ENCODE measurements at regions of chr17 and their contacts with region 1.

Region 1: GRCh38 chr17:75784473-75785015 is at the start of gene UNK:
- DNase-seq: peak; percentile 97
- ATAC-seq: peak; percentile 67
- H3K4me3 Mint-ChIP-seq: peak within 1 kb of the TSS; percentile 91
- H3K27ac Mint-ChIP-seq: peak within 1 kb of the TSS; percentile 100
- H3K4me1 Mint-ChIP-seq: peaks cover 55% of the 10 kb centered on the region
- H3K27me3 Mint-ChIP-seq: peaks cover 1% of the 10 kb centered on the region
- total RNA-seq, gene UNK: 24.5 to 33.7 TPM

Region 2: GRCh38 chr17:75261336-75262111 is 523.0 kb before region 1 on chr17 and contains the starts of genes GGA3 and MRPS7:
- CTCF ChIA-PET with region 1: no interaction called
- POLR2A ChIA-PET with region 1: no interaction called
- intact Hi-C with region 1: loop called in 1 of 2 experiments (anchors 2 kb)
- DNase-seq: peak; percentile 98
- ATAC-seq: peak; percentile 91
- H3K4me3 Mint-ChIP-seq: peak within 1 kb of the TSS; percentile 88
- H3K27ac Mint-ChIP-seq: peak within 1 kb of the TSS; percentile 96
- H3K4me1 Mint-ChIP-seq: peaks cover 48% of the 10 kb centered on the region
- H3K27me3 Mint-ChIP-seq: no peaks in the 10 kb centered on the region
- total RNA-seq, gene GGA3: 72.9 to 76.7 TPM
- total RNA-seq, gene MRPS7: 51.4 to 63.8 TPM

Region 3: GRCh38 chr17:75773808-75774470 is 10.6 kb before region 1 on chr17:
- CTCF ChIA-PET with region 1: interaction called, 12 read pairs
- POLR2A ChIA-PET with region 1: interaction called, 45 read pairs
- intact Hi-C with region 1: no loop called
- DNase-seq: no peak
- ATAC-seq: no peak
- H3K4me3 Mint-ChIP-seq: no peak overlapping the region
- H3K27ac Mint-ChIP-seq: no peak overlapping the region
- H3K4me1 Mint-ChIP-seq: peaks cover 21% of the 10 kb centered on the region
- H3K27me3 Mint-ChIP-seq: no peaks in the 10 kb centered on the region

Region 4: GRCh38 chr17:75877752-75878173 is 93.2 kb after region 1 on chr17:
- CTCF ChIA-PET with region 1: interaction called, 4 read pairs
- POLR2A ChIA-PET with region 1: interaction called, 3 read pairs
- intact Hi-C with region 1: loop called in 1 of 2 experiments (anchors 1 kb)
- DNase-seq: peak; percentile 87
- ATAC-seq: peak; percentile 72
- H3K4me3 Mint-ChIP-seq: peak overlapping the region; percentile 91
- H3K27ac Mint-ChIP-seq: peak overlapping the region; percentile 94
- H3K4me1 Mint-ChIP-seq: peaks cover 26% of the 10 kb centered on the region
- H3K27me3 Mint-ChIP-seq: peaks cover 2% of the 10 kb centered on the region

Region 5: DNA sequence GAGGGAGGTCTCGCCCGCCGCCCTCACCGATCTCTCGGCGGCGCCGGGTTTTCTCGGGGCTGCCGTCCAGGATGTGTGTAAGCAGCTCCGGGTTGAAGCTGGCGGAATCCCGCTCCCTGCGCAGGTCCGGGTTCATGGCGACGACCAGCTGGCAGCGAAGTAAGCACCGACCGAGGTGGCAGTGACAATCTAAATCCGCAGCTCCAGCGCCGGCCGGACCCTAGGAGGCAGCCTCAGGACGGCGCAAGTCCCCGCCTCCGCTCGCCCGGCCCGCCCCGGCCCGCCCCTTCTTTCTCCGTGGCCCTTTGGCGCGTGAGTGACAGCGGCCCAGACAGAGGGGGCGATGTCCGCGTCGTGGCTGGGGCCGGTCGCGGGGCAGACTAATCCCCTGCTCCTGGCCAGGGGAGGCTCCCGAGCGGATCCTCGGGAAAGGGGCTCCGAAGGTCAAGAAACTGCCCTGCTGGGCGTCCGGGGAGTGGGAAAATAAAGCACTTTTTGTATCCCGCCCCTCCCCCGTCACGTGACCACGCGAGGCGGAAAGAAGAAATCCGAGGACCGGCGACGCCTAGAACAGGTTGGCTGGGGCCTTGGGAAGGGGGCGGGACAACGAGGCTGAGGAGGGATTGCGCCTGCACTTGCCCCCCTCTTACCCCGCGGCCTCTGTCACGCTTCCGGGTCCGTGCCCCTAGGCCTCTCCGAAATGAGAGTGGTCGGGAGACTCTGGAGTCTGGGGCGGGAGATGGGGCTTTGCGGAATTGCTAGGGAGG is 194.6 kb after region 1 on chr17 and contains the starts of genes ACOX1 and TEN1:
- CTCF ChIA-PET with region 1: no interaction called
- POLR2A ChIA-PET with region 1: interaction called, 4 read pairs
- intact Hi-C with region 1: loop called in 1 of 2 experiments (anchors 1 kb)
- DNase-seq: peak; percentile 98
- ATAC-seq: peak; percentile 96
- H3K4me3 Mint-ChIP-seq: peak within 1 kb of the TSS; percentile 89
- H3K27ac Mint-ChIP-seq: peak within 1 kb of the TSS; percentile 94
- H3K4me1 Mint-ChIP-seq: peaks cover 30% of the 10 kb centered on the region
- H3K27me3 Mint-ChIP-seq: no peaks in the 10 kb centered on the region
- total RNA-seq, gene ACOX1: 27.7 to 33.1 TPM
- total RNA-seq, gene TEN1: 9.8 to 13.6 TPM

Region 6: DNA sequence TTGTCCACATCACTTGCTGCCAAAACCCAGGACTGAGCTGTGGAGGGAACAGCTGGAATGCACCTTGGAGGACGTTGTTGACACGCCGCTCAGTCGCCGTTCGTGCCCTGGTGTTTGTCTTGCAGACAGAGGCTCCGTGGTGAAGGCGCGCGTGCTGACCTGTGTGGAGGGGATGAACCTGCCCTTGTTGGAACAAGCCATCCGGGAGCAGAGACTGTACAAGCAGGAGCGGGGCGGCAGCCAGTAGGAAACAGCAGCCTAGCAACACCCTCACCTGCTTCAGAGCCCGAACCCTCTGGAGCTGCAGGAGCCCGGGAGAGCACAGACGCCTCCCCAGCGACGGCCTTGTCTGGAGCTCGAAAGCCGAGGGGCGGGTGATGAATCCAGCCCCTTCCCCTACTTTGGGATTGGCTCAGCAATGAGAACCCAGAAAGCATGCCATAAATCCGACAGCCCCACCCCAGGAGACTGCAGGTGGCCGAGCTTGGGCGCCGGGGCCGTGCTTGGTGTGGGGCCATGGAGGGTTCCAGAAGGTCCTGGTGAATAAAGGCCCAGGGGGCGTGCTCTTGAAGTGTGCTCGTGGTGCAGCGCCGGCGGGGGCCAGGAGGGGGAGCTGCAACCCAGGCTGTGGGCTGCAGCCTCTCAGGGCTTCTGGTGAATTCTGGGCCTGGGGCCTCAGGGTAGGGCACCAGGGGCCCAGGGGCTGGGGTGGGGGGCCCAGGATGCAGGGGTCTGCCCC is 215.6 kb after region 1 on chr17:
- CTCF ChIA-PET with region 1: no interaction called
- POLR2A ChIA-PET with region 1: no interaction called
- intact Hi-C with region 1: no loop called
- DNase-seq: peak; percentile 85
- ATAC-seq: peak; percentile 83
- H3K4me3 Mint-ChIP-seq: no peak overlapping the region
- H3K27ac Mint-ChIP-seq: no peak overlapping the region
- H3K4me1 Mint-ChIP-seq: peaks cover 14% of the 10 kb centered on the region
- H3K27me3 Mint-ChIP-seq: no peaks in the 10 kb centered on the region

Region 7: DNA sequence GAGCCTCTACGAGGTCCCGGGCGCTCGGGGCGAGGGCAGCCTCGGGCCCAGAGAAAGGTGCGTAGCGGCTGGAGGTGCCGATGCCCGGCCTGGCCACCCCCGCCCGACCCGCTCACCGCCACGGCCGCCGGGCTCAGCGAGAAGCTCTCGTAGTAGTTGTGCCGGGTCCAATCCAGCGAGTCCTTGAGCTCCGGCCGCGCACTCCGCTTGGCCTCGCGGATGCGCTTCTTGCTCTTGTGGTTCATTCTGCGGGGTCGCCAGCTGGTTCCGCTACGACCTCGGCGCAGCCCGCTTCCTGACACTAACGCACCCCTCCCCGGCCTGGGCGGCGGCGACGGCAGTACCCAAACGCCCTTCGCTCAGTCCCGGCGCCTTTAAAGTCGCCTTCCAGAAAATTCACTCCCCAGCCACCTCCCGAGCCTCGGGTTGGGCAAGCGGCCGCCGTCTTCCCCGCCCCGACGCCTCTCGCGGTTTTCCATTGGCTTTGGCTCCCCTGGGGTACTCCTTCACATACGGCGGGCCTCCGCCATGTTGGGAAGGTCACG is 941.8 kb after region 1 on chr17 and contains the start of gene JMJD6:
- CTCF ChIA-PET with region 1: no interaction called
- POLR2A ChIA-PET with region 1: no interaction called
- intact Hi-C with region 1: loop called in 1 of 2 experiments (anchors 2 kb)
- DNase-seq: peak; percentile 97
- ATAC-seq: peak; percentile 87
- H3K4me3 Mint-ChIP-seq: peak within 1 kb of the TSS; percentile 97
- H3K27ac Mint-ChIP-seq: peak within 1 kb of the TSS; percentile 98
- H3K4me1 Mint-ChIP-seq: peaks cover 54% of the 10 kb centered on the region
- H3K27me3 Mint-ChIP-seq: no peaks in the 10 kb centered on the region
- total RNA-seq, gene JMJD6: 51.3 to 65.5 TPM